ENCODE measurements at regions of chr7 and their contacts with region 1.

Region 1: DNA sequence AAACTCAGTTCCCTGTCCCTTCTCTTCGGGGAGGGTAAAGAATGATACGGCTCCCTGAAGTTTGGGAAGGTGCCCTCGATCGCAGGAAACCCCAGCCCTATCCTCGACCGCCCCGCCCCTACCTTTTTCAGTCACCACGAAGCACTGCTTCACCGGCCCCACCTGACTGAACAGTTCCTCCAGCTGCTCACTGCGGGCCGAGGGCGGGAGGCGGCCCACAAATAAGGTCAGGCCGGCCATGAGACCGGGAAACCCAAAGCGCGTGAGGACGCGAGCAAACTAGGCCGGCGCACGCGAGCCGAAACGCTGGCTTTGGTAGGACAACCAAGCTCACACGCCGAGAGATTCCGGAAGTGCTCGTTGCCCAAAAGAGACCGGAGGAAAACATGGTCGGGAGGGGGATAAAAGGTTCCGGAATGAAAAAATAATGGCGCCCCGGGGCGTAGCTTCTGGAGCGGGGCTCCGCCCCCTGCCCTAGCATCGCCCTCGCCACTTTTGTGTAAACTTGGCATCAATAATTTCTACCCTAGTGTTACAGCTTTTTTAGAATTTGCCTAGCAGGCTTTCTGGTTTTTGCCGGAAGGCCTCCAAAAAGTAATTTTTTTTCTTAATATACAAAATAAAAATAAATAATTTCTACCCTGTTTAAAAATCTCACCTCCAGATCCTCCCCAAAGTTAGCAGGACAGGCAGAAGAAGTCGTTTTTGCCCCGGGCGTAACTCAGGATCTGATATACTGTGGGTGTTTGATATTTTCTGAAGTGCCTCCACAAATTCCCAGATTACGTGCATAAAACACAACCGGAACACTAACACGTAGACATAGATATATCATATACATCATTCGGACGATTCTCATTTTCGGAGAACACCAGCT is at the start of gene RBM28:
- DNase-seq: peak; percentile 40
- H3K4me3 ChIP-seq: peak within 1 kb of the TSS; percentile 90
- CTCF ChIP-seq: no peak

Region 2: GRCh38 chr7:128135515-128136214 is 208.1 kb before region 1 on chr7:
- CTCF ChIA-PET with region 1: no interaction called
- POLR2A ChIA-PET with region 1: no interaction called
- DNase-seq: no peak
- H3K4me3 ChIP-seq: peak overlapping the region; percentile 65
- CTCF ChIP-seq: peak; percentile 68

Region 3: DNA sequence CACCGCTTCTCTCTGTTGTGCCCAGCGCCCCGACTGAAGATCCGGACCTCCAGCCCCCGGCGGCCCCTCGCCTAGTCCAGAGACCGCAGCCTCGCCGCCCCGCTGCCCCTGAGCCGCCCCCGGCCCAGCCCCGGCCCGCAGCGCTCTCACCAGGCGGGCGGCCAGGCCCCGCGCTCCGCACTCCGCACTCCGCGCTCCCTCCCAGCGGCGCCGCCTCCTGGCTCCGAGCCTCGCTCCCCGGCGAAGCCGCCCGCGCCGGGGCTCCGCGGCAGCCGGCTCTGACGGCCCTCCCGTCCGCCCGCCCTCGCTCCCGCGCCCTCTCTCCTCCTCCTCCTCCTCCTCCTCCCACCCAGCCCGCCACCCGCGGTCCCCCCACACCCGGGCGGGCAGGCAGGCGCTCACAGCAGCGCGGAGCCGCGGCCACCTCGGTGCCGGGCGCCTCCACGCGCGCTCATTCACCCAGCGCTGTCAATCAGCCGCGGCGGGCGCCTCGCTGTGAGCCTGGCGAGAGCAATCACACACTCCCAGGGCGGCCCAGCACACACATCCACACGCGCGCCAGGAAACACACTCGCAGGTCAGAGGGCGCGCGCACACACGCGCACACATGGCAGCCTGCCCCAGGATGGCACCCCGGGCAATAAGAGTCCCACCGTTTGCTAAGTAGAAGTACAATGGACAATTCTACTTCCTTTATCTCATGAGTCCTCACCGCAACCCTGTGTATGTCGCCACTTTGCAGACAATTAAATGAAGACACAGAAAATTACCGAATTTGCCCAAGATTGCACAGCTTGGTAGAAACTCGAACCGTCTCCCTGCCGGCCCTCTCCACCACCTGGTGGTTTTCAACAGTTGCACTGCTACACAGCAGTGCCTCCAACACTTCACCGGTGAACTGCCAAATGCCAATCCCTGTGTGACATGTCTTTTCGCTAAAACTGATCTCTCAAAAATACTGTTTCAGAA is 17.9 kb after region 1 on chr7 and contains the start of gene PRRT4:
- CTCF ChIA-PET with region 1: interaction called, 47 read pairs
- POLR2A ChIA-PET with region 1: interaction called, 5 read pairs
- DNase-seq: no peak
- H3K4me3 ChIP-seq: peak within 1 kb of the TSS; percentile 46
- CTCF ChIP-seq: no peak

Region 4: DNA sequence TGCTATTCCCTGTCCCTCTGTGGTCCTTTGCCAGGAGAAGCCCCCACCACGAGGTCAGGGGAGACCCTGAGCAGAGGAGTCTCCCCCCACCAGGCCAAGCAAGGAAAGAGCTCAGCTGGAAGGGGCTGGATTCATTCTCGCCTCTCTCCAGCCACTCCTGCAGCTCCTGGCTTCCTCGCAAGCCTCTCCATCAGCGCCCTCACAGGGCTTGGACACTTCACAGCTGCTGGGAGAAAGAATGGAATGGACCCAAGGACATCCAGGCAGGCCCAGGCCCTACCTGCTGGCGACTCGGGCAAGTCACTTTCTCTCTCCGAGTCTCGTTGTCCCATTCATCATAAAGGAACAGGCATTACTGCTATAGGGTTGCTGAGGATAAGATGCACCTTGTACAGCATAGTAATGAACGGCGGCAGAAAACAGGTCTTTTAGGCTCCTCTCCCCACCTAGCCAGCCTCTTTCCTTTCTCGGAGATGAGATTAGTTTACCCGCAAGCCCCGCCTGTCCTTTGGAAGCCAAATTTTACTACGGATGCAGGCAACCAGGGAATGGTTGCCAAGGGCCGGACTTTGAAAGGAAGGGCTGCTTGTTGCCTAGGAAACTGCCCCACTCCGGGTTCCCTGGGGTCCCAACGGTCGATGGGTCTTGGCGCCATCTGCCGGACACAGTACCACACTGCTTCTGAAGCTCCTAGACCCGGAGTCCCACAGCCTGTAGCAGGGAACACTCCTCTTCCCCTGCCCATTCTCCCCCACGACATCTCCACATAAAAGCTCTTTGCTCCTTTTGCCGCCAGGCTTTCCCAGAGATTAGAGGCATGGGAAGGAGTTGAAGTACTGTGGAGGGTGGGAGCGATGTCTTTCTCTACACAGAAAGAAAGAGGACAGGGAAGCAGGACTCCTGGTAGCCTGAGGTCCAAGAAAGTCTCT is 43.7 kb after region 1 on chr7:
- CTCF ChIA-PET with region 1: interaction called, 690 read pairs
- POLR2A ChIA-PET with region 1: interaction called, 9 read pairs
- DNase-seq: no peak
- H3K4me3 ChIP-seq: no peak overlapping the region
- CTCF ChIP-seq: peak; percentile 89

Region 5: GRCh38 chr7:128409596-128410160 is 65.9 kb after region 1 on chr7 and contains the start of gene IMPDH1:
- CTCF ChIA-PET with region 1: interaction called, 13 read pairs
- POLR2A ChIA-PET with region 1: interaction called, 3 read pairs
- DNase-seq: no peak
- H3K4me3 ChIP-seq: peak within 1 kb of the TSS; percentile 85
- CTCF ChIP-seq: no peak

Measured in AG04449 (cell line).